Head of caudate nucleus (tissue), 42 donors: ENCODE measurements at regions of chr4 and their contacts with region 1.

Region 1: GRCh38 chr4:6986781-6987587 is 56.2 kb upstream of the TADA2B start:
- DNase-seq: peak; percentile 86 to 99 (median 97)

Region 2: GRCh38 chr4:6709230-6710114 is 277.5 kb before region 1 on chr4 and contains the start of gene MRFAP1L1:
- intact Hi-C with region 1: loop called (anchors 10 kb)
- DNase-seq: peak; percentile 90 to 99 (median 96)

Region 3: DNA sequence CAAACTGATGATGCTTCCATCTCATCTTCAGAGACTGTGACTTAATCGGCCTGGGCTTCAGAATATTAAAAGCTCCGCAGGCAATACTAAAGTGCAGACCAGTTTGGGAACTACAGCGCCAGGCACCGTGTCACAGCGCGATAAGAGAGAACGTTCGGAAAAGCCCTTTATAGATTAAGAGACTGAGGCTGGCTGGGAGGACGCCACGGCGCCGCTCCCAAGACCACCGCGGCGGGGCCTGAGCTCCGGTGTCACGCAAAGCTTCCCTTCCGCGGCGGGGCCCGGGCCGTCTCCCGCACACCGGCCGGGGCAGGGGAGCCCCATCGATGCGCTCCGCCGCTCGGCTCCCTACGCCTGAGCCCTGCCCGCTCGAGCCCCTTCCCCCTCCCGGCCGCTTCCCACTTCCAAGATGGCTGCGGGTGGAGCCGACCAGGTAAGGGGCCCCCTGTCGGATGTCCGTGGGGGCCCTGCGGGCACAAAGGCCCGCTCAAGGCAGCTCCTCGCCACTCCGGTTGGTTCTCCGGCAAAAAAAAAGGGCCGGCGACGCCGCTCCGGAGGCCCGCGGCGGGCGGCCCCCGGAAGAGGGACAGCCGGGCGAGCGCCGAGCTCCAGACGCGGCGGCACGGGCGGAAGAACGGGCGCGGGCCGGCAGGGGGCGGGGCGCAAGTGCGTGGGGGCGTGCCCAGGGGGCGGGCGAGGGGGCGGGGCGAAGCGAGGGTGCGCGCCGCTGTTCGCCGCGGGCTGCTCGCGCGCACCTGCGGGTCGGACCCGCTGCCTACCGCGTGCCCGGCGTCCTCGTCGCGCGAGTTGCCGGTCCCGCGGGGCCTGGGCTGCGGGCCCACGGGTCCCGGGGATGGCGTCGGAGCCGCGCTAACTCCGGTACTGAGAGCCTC is 77.7 kb before region 1 on chr4 and contains the start of gene TBC1D14:
- intact Hi-C with region 1: loop called (anchors 2 kb)
- DNase-seq: peak; percentile 60 to 96 (median 90)

Region 4: DNA sequence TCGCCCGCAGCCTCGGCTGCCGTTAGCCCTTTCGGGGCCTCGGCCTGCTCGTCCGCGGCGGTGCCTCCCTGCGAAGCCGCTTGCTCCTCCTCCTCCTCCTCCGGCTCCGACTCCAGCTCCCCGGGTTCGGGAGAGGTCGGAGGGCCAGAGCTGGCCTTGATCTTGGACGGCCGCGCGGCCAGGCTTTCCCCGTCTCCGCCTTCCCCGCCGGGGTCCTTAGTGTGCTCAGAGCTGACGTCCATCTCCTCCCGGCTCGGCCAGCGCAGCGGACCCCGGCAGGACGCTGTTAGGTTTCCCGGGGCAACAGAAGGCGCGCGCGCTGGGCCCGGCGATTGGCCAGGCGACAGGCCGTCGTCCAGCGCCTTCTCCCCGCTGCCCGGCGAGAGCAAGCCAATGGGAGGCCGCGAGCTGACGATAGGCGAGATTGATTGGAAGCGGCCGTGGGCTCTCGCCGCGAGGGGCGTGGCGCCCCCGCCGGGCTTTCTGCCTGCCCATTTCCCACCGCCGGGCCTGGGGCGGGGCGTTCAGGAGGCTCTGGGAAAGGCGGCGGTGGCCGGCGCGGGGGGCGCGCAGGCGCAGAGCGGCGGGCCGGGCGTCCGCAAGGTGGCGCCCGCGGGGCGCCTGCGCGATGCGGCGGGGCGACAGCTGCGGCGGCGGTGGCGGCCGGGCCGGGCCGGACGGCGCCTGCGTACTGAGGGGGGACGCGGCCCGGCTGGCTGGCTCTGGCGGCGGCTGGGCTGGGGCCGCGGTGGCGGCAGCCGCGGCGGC is 55.9 kb after region 1 on chr4 and contains the start of gene TADA2B:
- intact Hi-C with region 1: loop called (anchors 5 kb)
- DNase-seq: peak; percentile 89 to 98 (median 96)